ENCODE measurements at regions of chr10 and their contacts with region 1.

Region 1: GRCh38 chr10:102583435-102584417 is 60.6 kb upstream of the TRIM8 start:
- DNase-seq: peak; percentile 91
- ATAC-seq: peak; percentile 92
- H3K4me3 Mint-ChIP-seq: no peak overlapping the region
- H3K27ac Mint-ChIP-seq: no peak overlapping the region
- H3K4me1 Mint-ChIP-seq: peaks cover 21% of the 10 kb centered on the region
- H3K27me3 Mint-ChIP-seq: no peaks in the 10 kb centered on the region; the same call in 1 of the 2 replicates
- CTCF ChIP-seq: peak; percentile 83

Region 2: GRCh38 chr10:102375250-102375649 is 208.5 kb before region 1 on chr10:
- CTCF ChIA-PET with region 1: interaction called, 10 read pairs
- POLR2A ChIA-PET with region 1: no interaction called
- DNase-seq: peak; percentile 36
- ATAC-seq: peak; percentile 90
- H3K4me3 Mint-ChIP-seq: no peak overlapping the region
- H3K27ac Mint-ChIP-seq: no peak overlapping the region
- H3K4me1 Mint-ChIP-seq: no peaks in the 10 kb centered on the region
- H3K27me3 Mint-ChIP-seq: no peaks in the 10 kb centered on the region
- CTCF ChIP-seq: no peak

Region 3: DNA sequence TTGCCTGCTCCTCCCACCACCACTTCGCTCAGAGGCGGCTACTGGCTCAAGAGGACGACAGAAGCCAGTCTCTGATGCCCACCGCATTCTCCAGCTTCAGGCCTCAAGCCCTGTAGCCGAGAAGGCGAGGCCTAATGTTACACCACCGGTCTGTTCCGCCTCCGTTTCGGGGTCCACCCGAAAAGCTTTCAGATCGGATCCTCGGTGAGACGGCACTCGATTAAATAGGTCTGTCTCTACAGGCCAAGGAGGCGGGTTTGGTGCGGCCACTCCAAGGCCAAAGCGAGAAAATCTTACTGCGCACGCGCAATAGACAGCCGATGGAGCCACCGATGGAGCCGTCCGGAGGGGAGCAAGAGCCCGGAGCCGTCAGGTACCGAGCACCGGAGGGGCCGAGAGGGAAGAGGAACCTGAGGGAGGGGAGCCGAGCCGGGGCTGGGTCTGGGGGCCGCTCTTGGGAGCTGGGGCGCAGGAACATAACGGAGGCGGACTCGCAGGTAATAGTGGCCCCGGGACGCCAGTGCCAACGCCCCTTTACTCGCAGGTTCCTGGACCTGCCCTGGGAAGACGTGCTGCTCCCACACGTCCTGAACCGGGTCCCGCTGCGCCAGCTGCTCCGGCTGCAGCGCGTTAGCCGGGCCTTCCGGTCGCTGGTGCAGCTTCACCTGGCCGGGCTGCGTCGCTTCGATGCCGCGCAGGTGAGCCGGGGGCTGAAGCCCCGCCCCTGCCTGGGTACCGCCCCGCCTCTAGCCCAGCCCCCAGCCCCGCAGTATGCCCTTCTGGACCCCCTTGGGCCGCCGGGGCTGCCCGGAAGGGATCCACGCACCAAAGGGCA is 162.7 kb before region 1 on chr10 and contains the start of gene FBXL15:
- CTCF ChIA-PET with region 1: interaction called, 10 read pairs
- POLR2A ChIA-PET with region 1: interaction called, 3 read pairs
- DNase-seq: peak; percentile 98
- ATAC-seq: peak; percentile 58
- H3K4me3 Mint-ChIP-seq: peak within 1 kb of the TSS; percentile 98
- H3K27ac Mint-ChIP-seq: peak within 1 kb of the TSS; percentile 99
- H3K4me1 Mint-ChIP-seq: peaks cover 19% of the 10 kb centered on the region
- H3K27me3 Mint-ChIP-seq: peaks cover 5% of the 10 kb centered on the region; the same call in 1 of the 2 replicates
- CTCF ChIP-seq: no peak
- total RNA-seq, gene FBXL15: 21.6 to 24.6 TPM (median 23.2 TPM) in 3 replicates

Region 4: DNA sequence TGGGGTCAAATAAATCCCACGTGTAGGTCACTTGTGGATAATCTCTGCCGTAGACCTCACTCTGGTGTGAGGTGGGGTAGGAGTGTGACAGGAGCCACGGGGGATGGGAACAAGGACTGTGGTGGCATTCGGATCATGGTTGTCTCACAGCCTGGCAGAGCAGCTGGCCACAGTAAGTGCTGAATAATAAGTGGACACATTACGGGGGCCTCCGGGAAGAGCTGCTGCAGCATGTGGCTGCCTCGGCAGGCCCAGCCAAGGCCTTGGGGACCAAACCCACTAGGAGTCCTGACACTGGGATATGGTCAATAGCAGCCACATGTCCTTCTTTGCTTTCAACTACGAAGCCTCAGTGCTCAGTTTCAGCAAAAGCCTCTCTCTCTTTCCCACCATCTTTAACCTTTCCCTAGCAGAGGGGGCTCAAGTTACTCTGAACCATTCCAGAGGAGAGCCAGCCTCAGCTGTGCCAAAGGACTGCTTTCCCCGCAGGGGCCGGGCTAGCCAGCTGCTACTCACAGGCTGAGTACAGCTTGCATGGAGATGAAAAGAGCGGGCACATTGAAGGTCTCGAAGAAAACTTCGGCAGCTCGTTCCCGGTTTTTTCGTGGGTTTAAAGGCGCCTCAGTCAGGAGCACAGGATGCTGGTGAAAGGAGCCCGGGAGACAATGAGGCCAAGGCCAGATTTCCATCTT is 98.5 kb before region 1 on chr10:
- CTCF ChIA-PET with region 1: interaction called, 33 read pairs
- POLR2A ChIA-PET with region 1: interaction called, 3 read pairs
- DNase-seq: no peak
- ATAC-seq: no peak
- H3K4me3 Mint-ChIP-seq: no peak overlapping the region
- H3K27ac Mint-ChIP-seq: no peak overlapping the region
- H3K4me1 Mint-ChIP-seq: no peaks in the 10 kb centered on the region
- H3K27me3 Mint-ChIP-seq: no peaks in the 10 kb centered on the region
- CTCF ChIP-seq: no peak

Region 5: DNA sequence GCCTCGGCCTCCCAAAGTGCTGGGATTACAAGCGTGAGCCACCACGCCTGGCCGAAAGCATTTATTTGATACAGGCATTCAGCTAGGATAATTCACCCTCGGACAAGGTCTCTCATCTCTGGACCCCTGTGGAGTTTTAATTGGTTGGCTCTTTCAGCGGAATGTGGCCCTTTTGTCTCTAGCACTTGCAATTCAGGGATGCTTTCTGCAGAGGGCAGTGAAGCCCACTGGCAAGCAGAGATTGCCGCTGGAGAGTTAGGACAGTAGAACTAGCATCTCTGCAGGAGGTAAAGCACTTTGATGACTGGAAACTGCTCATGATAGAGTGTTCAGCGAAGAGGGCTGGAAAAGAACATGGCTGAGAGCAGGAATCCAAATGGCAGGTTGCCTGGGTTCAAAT is 17.9 kb before region 1 on chr10:
- CTCF ChIA-PET with region 1: interaction called, 30 read pairs
- POLR2A ChIA-PET with region 1: no interaction called
- DNase-seq: peak; percentile 79
- ATAC-seq: peak; percentile 94
- H3K4me3 Mint-ChIP-seq: no peak overlapping the region
- H3K27ac Mint-ChIP-seq: no peak overlapping the region
- H3K4me1 Mint-ChIP-seq: peaks cover 4% of the 10 kb centered on the region
- H3K27me3 Mint-ChIP-seq: peaks cover 94% of the 10 kb centered on the region
- CTCF ChIP-seq: 0 out of 2 replicates have a peak, but pooled peaks have one; percentile 12

Region 6: GRCh38 chr10:102641880-102642735 is 58.4 kb after region 1 on chr10:
- CTCF ChIA-PET with region 1: interaction called, 11 read pairs
- POLR2A ChIA-PET with region 1: no interaction called
- DNase-seq: peak; percentile 99
- ATAC-seq: peak; percentile 86
- H3K4me3 Mint-ChIP-seq: peak overlapping the region; percentile 85
- H3K27ac Mint-ChIP-seq: peak overlapping the region; percentile 99
- H3K4me1 Mint-ChIP-seq: peaks cover 21% of the 10 kb centered on the region
- H3K27me3 Mint-ChIP-seq: peaks cover 4% of the 10 kb centered on the region; the same call in 1 of the 2 replicates
- CTCF ChIP-seq: no peak